CD8-positive, alpha-beta memory T cell (primary cell): ENCODE measurements at regions of chr15 and their contacts with region 1.

Region 1: GRCh38 chr15:85330901-85331588 is 49.4 kb upstream of the AKAP13 start:
- DNase-seq: peak; percentile 46 to 84 (median 54)
- H3K4me3 ChIP-seq: peak overlapping the region; percentile 65
- H3K4me3 Mint-ChIP-seq: peak overlapping the region; percentile 87 to 95 (median 94)
- H3K27ac ChIP-seq: peak overlapping the region; percentile 46
- H3K27ac Mint-ChIP-seq: peak overlapping the region; percentile 85 to 98 (median 92)
- H3K4me1 ChIP-seq: peaks cover 27% of the 10 kb centered on the region
- H3K4me1 Mint-ChIP-seq: peaks cover 35 to 47% (median 43%) of the 10 kb centered on the region in 3 donors
- H3K27me3 ChIP-seq: no peaks in the 10 kb centered on the region
- H3K27me3 Mint-ChIP-seq: no peaks in the 10 kb centered on the region

Region 2: GRCh38 chr15:85296615-85297402 is 34.2 kb before region 1 on chr15:
- CTCF ChIA-PET with region 1: interaction called, 27 read pairs
- POLR2A ChIA-PET with region 1: no interaction called
- DNase-seq: peak; percentile 40 to 73 (median 63)
- H3K4me3 ChIP-seq: peak overlapping the region; percentile 47
- H3K4me3 Mint-ChIP-seq: peak overlapping the region in 6 of 7 donors; percentile 18 to 72 (median 52)
- H3K27ac ChIP-seq: no peak overlapping the region
- H3K27ac Mint-ChIP-seq: peak overlapping the region in 1 of 8 donors; percentile 16
- H3K4me1 ChIP-seq: peaks cover 7% of the 10 kb centered on the region
- H3K4me1 Mint-ChIP-seq: peaks cover 11 to 15% (median 12%) of the 10 kb centered on the region in 3 donors
- H3K27me3 ChIP-seq: no peaks in the 10 kb centered on the region
- H3K27me3 Mint-ChIP-seq: peaks cover 0 to 3% of the 10 kb centered on the region in 2 donors

Region 3: GRCh38 chr15:85306946-85307708 is 23.9 kb before region 1 on chr15:
- CTCF ChIA-PET with region 1: interaction called, 12 read pairs
- POLR2A ChIA-PET with region 1: interaction called, 10 read pairs
- DNase-seq: no peak
- H3K4me3 ChIP-seq: no peak overlapping the region
- H3K4me3 Mint-ChIP-seq: no peak overlapping the region
- H3K27ac ChIP-seq: no peak overlapping the region
- H3K27ac Mint-ChIP-seq: no peak overlapping the region
- H3K4me1 ChIP-seq: no peaks in the 10 kb centered on the region
- H3K4me1 Mint-ChIP-seq: peaks cover 0 to 16% (median 15%) of the 10 kb centered on the region in 3 donors
- H3K27me3 ChIP-seq: no peaks in the 10 kb centered on the region
- H3K27me3 Mint-ChIP-seq: peaks cover 0 to 3% of the 10 kb centered on the region in 2 donors

Region 4: DNA sequence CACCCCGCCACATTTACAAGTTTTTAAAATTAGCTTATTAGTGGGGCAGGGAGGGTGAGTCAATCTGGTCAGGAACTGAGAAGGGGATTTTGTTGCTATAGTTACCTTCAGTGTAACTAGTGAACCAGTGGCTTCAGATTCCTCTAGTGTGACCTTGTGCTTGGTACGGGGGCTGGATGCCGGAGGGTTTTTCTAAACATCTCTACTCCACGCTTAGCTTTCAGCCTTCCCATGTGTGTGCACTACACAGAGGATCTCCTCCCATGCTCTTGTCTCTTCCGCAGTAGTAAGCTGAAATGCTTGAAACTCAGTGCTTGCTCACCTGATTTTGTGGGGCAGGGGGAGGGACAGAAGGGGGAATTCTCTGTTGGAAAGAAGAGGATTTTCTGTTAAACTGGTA is 18.6 kb before region 1 on chr15:
- CTCF ChIA-PET with region 1: interaction called, 20 read pairs
- POLR2A ChIA-PET with region 1: interaction called, 5 read pairs
- DNase-seq: peak in 1 of 5 donors; percentile 52
- H3K4me3 ChIP-seq: no peak overlapping the region
- H3K4me3 Mint-ChIP-seq: peak overlapping the region in 2 of 7 donors; percentile 35 to 63
- H3K27ac ChIP-seq: no peak overlapping the region
- H3K27ac Mint-ChIP-seq: peak overlapping the region in 2 of 8 donors; percentile 58 to 78
- H3K4me1 ChIP-seq: peaks cover 20% of the 10 kb centered on the region
- H3K4me1 Mint-ChIP-seq: peaks cover 29 to 56% (median 53%) of the 10 kb centered on the region in 3 donors
- H3K27me3 ChIP-seq: no peaks in the 10 kb centered on the region
- H3K27me3 Mint-ChIP-seq: peaks cover 0 to 1% of the 10 kb centered on the region in 2 donors

Region 5: DNA sequence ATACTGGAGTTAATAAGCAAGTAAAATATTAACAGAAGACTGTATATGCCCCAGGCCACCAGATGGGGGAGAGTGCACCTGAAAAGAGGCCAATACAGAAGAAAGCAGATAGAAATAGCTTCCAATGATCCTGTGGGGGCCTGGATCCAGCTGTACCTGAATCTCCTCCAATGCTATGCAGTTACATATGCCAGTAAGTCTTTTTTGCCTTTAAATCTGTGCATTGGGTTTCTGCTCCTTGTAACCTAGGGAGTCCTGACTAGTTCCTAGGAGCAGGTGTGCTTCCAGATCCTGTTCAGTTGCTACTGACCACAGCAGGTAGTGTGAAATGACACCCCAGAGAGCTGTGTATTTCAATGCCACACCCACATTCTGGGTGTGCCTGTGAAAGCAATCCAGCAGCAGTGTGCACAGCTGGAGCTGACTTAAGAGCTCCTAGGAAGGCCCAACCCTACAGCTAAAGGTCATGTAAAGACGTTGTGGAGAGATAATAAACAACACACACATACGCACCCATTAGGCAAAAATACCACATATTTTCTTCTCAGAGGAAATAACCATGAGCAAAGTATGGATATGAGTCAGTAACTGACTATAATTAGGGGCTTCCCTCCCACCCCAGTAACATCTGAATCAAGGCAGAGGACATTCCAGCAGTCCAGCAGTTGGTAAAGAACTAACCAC is 12.9 kb before region 1 on chr15:
- CTCF ChIA-PET with region 1: interaction called, 20 read pairs
- POLR2A ChIA-PET with region 1: interaction called, 5 read pairs
- DNase-seq: peak in 2 of 5 donors; percentile 12 to 59
- H3K4me3 ChIP-seq: no peak overlapping the region
- H3K4me3 Mint-ChIP-seq: peak overlapping the region in 2 of 7 donors; percentile 16 to 30
- H3K27ac ChIP-seq: no peak overlapping the region
- H3K27ac Mint-ChIP-seq: peak overlapping the region in 5 of 8 donors; percentile 22 to 70 (median 52)
- H3K4me1 ChIP-seq: peaks cover 34% of the 10 kb centered on the region
- H3K4me1 Mint-ChIP-seq: peaks cover 34 to 47% (median 46%) of the 10 kb centered on the region in 3 donors
- H3K27me3 ChIP-seq: no peaks in the 10 kb centered on the region
- H3K27me3 Mint-ChIP-seq: no peaks in the 10 kb centered on the region

Region 6: GRCh38 chr15:85359281-85359680 is 28.2 kb after region 1 on chr15:
- CTCF ChIA-PET with region 1: no interaction called
- POLR2A ChIA-PET with region 1: no interaction called
- DNase-seq: no peak
- H3K4me3 ChIP-seq: no peak overlapping the region
- H3K4me3 Mint-ChIP-seq: no peak overlapping the region
- H3K27ac ChIP-seq: no peak overlapping the region
- H3K27ac Mint-ChIP-seq: no peak overlapping the region
- H3K4me1 ChIP-seq: no peaks in the 10 kb centered on the region
- H3K4me1 Mint-ChIP-seq: peaks cover 5 to 13% (median 7%) of the 10 kb centered on the region in 3 donors
- H3K27me3 ChIP-seq: no peaks in the 10 kb centered on the region
- H3K27me3 Mint-ChIP-seq: peaks cover 0 to 4% of the 10 kb centered on the region in 2 donors

Region 7: DNA sequence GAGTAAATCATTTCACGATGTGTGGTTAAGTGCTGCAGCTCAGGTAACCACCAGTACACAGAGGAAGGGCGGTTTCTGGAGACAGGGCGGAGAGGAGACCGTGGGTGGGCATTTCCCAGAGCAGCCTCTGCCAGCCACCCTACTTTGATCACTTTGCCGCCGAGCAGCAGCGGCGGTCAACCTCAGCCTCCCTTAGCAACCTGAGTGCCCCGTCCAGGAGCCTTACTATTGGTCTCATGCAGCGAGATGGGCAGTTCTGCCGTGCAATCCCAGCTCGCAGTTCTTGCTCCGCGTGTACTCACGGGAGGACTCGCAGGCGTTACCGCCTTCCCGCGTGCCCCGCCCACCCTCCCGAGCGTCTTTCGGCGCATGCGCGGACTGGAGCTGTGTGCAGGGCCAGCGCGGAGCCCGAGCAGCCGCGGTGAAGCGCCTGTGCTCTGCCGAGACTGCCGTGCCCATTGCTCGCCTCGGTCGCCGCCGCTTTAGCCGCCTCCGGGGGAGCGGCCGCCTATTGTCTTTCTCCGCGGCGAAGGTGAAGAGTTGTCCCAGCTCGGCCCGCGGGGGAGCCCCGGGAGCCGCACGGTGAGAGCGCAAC is 49.3 kb after region 1 on chr15 and contains the start of gene AKAP13:
- CTCF ChIA-PET with region 1: interaction called, 12 read pairs
- POLR2A ChIA-PET with region 1: interaction called, 14 read pairs
- DNase-seq: peak; percentile 89 to 97 (median 94)
- H3K4me3 ChIP-seq: peak within 1 kb of the TSS; percentile 51
- H3K4me3 Mint-ChIP-seq: peak within 1 kb of the TSS; percentile 85 to 93 (median 88)
- H3K27ac ChIP-seq: peak within 1 kb of the TSS; percentile 46
- H3K27ac Mint-ChIP-seq: peak within 1 kb of the TSS; percentile 84 to 99 (median 95)
- H3K4me1 ChIP-seq: peaks cover 32% of the 10 kb centered on the region
- H3K4me1 Mint-ChIP-seq: peaks cover 49 to 67% (median 61%) of the 10 kb centered on the region in 3 donors
- H3K27me3 ChIP-seq: no peaks in the 10 kb centered on the region
- H3K27me3 Mint-ChIP-seq: peaks cover 0 to 3% of the 10 kb centered on the region in 2 donors
- total RNA-seq, gene AKAP13: 109 to 113 TPM

Region 8: DNA sequence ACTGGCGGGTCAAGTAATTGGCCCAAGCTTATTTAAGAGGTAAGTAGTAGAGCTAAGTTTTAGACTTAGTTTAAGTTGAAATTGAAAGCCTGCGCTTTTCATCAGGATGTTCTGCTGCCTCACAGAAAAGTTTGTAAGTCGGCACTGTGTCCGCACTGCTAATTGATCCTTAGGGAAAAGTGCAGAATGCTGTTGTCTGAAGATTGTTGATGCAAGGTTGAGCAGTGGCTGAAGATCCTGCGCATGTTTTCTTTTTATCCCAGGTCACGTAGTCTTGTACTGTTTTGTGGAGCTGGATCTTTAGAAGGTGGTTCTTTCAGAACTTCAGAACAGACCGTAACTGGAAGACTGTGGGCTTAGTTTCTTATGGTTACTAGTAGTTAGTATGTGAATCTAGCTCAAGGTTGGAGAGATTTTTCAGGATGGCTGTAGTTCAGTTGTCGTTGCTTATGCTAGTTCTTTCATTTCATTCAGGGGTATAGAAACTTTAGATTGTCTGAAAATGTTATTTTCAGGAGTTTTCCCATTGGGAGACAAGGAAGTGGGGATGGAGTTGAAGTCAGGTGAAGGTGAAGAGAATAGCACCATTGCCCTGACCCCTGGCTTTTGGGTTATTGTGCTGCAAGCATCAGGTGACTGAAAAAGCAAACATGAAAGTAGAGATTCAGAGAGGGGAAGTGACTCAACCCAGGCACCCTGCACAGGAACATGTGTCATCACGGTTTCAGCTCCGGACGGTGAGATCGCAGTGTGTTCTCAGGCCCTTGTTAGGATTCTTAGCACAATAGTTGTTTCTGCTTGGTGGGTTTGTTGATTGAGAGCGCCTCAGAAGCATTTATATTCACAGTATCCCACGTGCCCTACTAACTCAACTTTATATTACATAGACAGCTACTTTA is 82.2 kb after region 1 on chr15:
- CTCF ChIA-PET with region 1: interaction called, 47 read pairs
- POLR2A ChIA-PET with region 1: interaction called, 4 read pairs
- DNase-seq: peak; percentile 42 to 80 (median 47)
- H3K4me3 ChIP-seq: peak overlapping the region; percentile 11
- H3K4me3 Mint-ChIP-seq: peak overlapping the region; percentile 10 to 78 (median 66)
- H3K27ac ChIP-seq: no peak overlapping the region
- H3K27ac Mint-ChIP-seq: peak overlapping the region; percentile 80 to 92 (median 85)
- H3K4me1 ChIP-seq: peaks cover 27% of the 10 kb centered on the region
- H3K4me1 Mint-ChIP-seq: peaks cover 53 to 83% (median 77%) of the 10 kb centered on the region in 3 donors
- H3K27me3 ChIP-seq: no peaks in the 10 kb centered on the region
- H3K27me3 Mint-ChIP-seq: no peaks in the 10 kb centered on the region